ENCODE measurements at regions of chr12 and their contacts with region 1.

Region 1: DNA sequence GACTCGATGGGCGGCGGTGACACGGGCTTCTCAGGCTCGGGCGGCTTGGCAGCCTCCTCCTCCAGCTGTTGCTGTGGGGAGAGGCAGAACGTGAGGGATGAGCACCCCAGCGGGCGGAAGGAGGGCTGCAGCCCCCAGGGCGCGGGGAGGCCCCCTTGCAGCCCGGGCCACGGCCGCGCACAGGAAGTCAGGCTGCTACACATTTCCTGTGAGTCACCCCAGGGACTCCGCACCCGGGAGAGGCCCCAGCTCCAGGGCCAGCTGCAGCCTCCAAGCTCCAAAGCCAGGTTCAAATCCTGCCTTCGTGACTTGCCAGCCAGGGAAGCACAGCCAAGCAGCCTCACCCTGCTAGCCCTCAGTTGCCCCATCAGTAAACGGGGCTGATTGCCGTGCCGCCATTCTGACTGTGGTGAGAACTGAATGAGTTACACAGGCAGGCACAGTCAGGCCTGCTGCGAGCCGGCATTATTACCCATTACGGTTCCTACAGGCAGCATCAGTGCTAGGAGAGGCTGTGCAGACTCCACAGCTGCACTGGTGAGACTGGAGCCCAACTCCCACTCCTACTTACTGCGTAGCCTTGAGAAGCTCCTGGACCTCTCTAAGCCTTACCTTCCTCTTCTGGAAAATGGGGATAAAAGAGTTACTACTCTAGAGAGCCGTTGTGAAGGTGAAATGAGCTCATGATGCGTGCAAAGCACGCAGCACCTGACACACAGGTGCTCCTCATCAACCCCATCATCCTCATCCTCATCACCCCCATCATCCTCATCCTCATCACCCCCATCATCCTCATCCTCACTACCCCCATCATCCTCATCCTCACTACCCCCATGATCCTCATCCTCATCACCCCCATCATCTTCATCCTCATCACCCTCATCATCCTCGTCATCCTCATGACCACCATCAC is 100.9 kb downstream of the NCOR2 start:
- DNase-seq: peak; percentile 99
- H3K4me3 ChIP-seq: peak overlapping the region; percentile 28
- H3K27ac ChIP-seq: peak overlapping the region; percentile 82
- H3K4me1 ChIP-seq: peaks cover 52% of the 10 kb centered on the region
- H3K27me3 ChIP-seq: no peaks in the 10 kb centered on the region
- CTCF ChIP-seq: peak; percentile 49

Region 2: DNA sequence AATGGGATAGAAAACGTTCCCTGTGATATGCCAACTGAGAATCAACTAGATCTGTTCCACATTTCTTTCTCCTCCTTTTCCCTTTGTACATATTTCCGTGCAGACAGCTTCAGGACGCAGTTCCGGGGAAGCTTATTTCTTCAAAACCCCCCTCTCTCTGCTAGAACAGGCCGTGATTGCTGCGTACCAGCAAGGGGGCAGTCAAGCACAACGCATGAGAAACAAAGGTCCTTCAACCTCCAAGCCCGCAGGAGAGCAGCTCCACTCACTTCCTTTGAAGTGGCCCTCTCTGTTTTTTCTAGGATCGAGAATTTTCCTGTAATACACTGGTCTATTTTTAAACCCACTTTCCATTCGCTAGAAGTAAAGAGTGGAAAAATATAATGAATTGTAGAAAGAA is 412.6 kb before region 1 on chr12:
- CTCF ChIA-PET with region 1: interaction called, 13 read pairs
- POLR2A ChIA-PET with region 1: no interaction called
- intact Hi-C with region 1: no loop called
- DNase-seq: peak; percentile 48
- H3K4me3 ChIP-seq: no peak overlapping the region
- H3K27ac ChIP-seq: no peak overlapping the region
- H3K4me1 ChIP-seq: no peaks in the 10 kb centered on the region
- H3K27me3 ChIP-seq: no peaks in the 10 kb centered on the region
- CTCF ChIP-seq: peak; percentile 66

Region 3: DNA sequence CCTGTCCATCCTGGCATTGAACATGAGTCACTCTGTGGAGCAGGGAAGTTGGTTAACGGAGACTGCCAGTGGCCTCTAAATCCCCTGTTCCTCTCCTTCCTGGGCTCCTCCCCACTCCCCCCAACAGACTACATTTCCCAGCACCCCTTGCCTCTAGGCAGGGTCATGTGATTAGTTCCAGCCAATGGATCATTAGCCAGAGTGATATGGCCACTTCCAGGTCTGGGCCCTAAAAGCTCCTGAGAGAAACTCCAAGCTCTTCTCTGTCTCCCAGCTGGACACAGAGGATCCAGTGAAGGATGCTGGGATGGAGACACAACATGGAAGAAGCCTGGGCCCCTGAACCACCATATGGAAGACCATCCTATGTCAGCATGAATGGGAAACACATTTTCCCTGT is 226.0 kb before region 1 on chr12:
- CTCF ChIA-PET with region 1: no interaction called
- POLR2A ChIA-PET with region 1: no interaction called
- intact Hi-C with region 1: no loop called
- DNase-seq: peak; percentile 39
- H3K4me3 ChIP-seq: no peak overlapping the region
- H3K27ac ChIP-seq: no peak overlapping the region
- H3K4me1 ChIP-seq: no peaks in the 10 kb centered on the region
- H3K27me3 ChIP-seq: no peaks in the 10 kb centered on the region
- CTCF ChIP-seq: no peak

Region 4: DNA sequence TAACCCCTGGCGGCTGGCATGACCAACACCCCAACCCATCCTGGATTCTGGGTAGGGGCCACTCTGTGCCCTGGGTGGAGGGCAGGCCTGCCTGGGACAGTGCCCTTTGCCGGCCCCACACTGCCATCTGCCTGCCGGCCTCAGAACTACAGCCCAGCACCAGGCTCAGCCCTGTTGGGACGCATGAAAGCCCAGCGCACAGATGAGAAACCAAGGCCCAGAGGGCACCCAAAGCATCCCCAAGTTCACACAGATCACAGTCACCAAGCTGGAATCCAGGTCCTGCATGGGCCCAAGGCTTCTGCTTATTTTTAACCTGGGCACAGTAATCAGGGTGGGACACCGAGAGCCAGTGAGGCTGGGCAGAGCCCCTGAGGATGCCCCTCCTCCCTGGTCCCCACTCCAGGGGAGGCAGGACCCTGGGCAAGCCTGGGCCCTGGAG is 145.4 kb before region 1 on chr12:
- CTCF ChIA-PET with region 1: no interaction called
- POLR2A ChIA-PET with region 1: no interaction called
- intact Hi-C with region 1: loop called (anchors 5 kb)
- DNase-seq: peak; percentile 56
- H3K4me3 ChIP-seq: no peak overlapping the region
- H3K27ac ChIP-seq: no peak overlapping the region
- H3K4me1 ChIP-seq: no peaks in the 10 kb centered on the region
- H3K27me3 ChIP-seq: no peaks in the 10 kb centered on the region
- CTCF ChIP-seq: peak; percentile 86

Region 5: GRCh38 chr12:124506145-124506831 is 39.8 kb after region 1 on chr12:
- CTCF ChIA-PET with region 1: interaction called, 3 read pairs
- POLR2A ChIA-PET with region 1: no interaction called
- intact Hi-C with region 1: loop called (anchors 5 kb)
- DNase-seq: peak; percentile 98
- H3K4me3 ChIP-seq: peak overlapping the region; percentile 20
- H3K27ac ChIP-seq: peak overlapping the region; percentile 88
- H3K4me1 ChIP-seq: peaks cover 71% of the 10 kb centered on the region
- H3K27me3 ChIP-seq: no peaks in the 10 kb centered on the region
- CTCF ChIP-seq: 0 out of 2 replicates have a peak, but pooled peaks have one; percentile 22

Region 6: DNA sequence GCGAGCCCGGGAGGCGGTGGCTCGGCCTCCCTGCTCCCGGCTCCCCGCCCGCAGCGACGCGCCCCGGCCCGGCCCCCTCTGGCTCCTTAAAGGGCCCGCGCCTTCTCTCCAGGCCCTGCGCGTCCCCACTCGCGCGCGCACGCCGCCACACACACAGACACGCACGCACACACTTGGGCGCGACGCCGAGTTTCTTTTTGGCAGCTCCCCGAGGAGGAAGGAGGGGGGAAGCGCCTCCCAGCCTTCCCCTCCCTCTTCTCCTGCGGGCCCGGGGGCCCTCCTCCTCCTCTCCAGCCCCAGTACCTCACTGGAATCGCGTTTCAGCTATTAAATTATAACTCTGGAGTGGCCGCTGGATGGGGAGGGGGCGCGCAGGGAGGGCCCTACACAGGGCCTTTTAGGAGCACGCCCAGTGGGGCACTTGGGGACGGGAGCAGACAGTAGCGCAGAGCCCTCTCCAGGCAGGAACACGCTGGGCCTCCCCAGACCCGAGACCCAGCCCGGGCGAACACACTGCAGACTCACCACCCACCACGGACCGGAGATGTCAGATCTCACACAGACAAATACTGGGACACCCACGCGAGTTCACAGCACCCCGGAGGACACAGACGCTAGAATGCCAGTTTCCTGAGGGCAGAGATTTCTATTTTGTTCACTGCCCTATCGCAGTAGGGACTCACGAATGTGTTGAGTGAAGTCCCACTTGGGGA is 101.3 kb after region 1 on chr12:
- CTCF ChIA-PET with region 1: interaction called, 3 read pairs
- POLR2A ChIA-PET with region 1: no interaction called
- intact Hi-C with region 1: loop called (anchors 5 kb)
- DNase-seq: peak; percentile 97
- H3K4me3 ChIP-seq: peak overlapping the region; percentile 37
- H3K27ac ChIP-seq: peak overlapping the region; percentile 88
- H3K4me1 ChIP-seq: peaks cover 38% of the 10 kb centered on the region
- H3K27me3 ChIP-seq: no peaks in the 10 kb centered on the region
- CTCF ChIP-seq: no peak

Region 7: DNA sequence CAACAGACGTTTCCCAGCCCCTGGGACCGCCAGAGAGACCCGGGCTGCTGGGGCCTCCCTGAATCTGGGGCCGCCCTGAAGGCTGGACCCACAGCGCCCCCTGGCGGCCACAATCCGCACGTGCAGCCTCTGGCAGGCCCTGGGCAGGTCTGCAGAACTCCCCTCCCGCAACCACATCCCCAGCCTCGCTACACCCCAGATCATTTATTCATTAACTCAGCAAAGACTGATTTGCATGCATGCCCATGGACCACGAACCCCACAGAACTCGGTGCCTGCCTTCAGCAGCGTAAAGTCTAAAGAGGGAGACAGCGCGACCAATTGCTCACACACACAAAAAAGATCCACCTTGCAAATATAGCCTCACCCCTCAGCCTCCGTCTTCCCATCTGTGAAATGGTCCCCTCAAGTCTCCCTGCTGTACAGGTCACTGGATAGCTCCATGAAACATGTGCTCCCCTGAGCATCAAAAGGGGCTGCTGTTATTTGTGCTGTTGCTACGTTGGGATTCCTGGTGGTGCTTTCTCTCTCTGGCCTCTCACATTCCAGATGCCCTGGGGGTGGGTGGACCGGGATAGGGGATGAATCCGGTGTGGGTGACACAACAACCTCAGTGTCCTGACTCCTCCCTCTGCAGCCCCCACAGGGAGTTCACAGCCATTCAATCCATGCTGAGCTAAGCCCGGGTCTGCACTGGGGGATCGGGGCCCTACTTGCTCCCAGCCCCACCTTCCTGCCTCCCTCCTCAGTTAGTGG is 300.8 kb after region 1 on chr12:
- CTCF ChIA-PET with region 1: no interaction called
- POLR2A ChIA-PET with region 1: no interaction called
- intact Hi-C with region 1: loop called (anchors 5 kb)
- DNase-seq: peak; percentile 83
- H3K4me3 ChIP-seq: no peak overlapping the region
- H3K27ac ChIP-seq: no peak overlapping the region
- H3K4me1 ChIP-seq: peaks cover 7% of the 10 kb centered on the region
- H3K27me3 ChIP-seq: no peaks in the 10 kb centered on the region
- CTCF ChIP-seq: peak; percentile 98